Vagina (tissue), 2 donors: ENCODE measurements at regions of chr9 and their contacts with region 1.

Region 1: GRCh38 chr9:112355427-112355897 is 22.0 kb upstream of the PTBP3 start:
- DNase-seq: no peak
- H3K4me3 ChIP-seq: no peak overlapping the region
- H3K27ac ChIP-seq: no peak overlapping the region
- H3K4me1 ChIP-seq: no peaks in the 10 kb centered on the region
- H3K27me3 ChIP-seq: no peaks in the 10 kb centered on the region
- CTCF ChIP-seq: no peak
- POLR2A ChIP-seq: no peak

Region 2: GRCh38 chr9:112097712-112098688 is 257.5 kb before region 1 on chr9:
- intact Hi-C with region 1: loop called (anchors 10 kb)
- DNase-seq: no peak
- H3K4me3 ChIP-seq: no peak overlapping the region
- H3K27ac ChIP-seq: no peak overlapping the region
- H3K4me1 ChIP-seq: no peaks in the 10 kb centered on the region
- H3K27me3 ChIP-seq: no peaks in the 10 kb centered on the region
- CTCF ChIP-seq: peak; percentile 64 to 78 (median 77)
- POLR2A ChIP-seq: no peak

Region 3: GRCh38 chr9:112421771-112422222 is 66.3 kb after region 1 on chr9:
- intact Hi-C with region 1: no loop called
- DNase-seq: no peak
- H3K4me3 ChIP-seq: no peak overlapping the region
- H3K27ac ChIP-seq: no peak overlapping the region
- H3K4me1 ChIP-seq: no peaks in the 10 kb centered on the region
- H3K27me3 ChIP-seq: no peaks in the 10 kb centered on the region
- CTCF ChIP-seq: no peak
- POLR2A ChIP-seq: no peak

Region 4: GRCh38 chr9:112605518-112605917 is 250.1 kb after region 1 on chr9:
- intact Hi-C with region 1: no loop called
- DNase-seq: no peak
- H3K4me3 ChIP-seq: no peak overlapping the region
- H3K27ac ChIP-seq: no peak overlapping the region
- H3K4me1 ChIP-seq: no peaks in the 10 kb centered on the region
- H3K27me3 ChIP-seq: no peaks in the 10 kb centered on the region
- CTCF ChIP-seq: no peak
- POLR2A ChIP-seq: no peak

Region 5: GRCh38 chr9:112764344-112764743 is 408.9 kb after region 1 on chr9:
- intact Hi-C with region 1: no loop called
- DNase-seq: no peak
- H3K4me3 ChIP-seq: no peak overlapping the region
- H3K27ac ChIP-seq: no peak overlapping the region
- H3K4me1 ChIP-seq: peaks cover 12% of the 10 kb centered on the region
- H3K27me3 ChIP-seq: no peaks in the 10 kb centered on the region
- CTCF ChIP-seq: no peak
- POLR2A ChIP-seq: no peak

Region 6: DNA sequence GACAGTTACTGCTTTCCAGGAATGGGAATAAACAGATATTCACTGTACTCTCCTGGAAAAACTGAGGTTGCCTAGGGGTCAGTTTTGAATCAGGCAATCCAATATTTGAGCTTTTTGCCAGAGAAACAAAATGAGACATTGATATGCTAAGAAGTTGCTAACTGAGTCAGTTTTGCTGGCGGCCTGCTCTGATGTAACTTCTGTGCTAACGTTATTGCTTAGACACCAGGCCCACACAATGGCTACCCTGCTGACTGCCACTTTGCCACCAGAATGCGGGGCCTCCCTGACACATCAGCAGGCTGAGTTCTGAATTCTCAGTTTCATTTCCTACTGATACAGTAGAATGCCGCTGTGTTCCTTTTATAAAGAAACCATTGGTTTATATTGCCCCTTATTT is 1502.4 kb after region 1 on chr9:
- intact Hi-C with region 1: no loop called
- DNase-seq: no peak
- H3K4me3 ChIP-seq: no peak overlapping the region
- H3K27ac ChIP-seq: no peak overlapping the region
- H3K4me1 ChIP-seq: no peaks in the 10 kb centered on the region
- H3K27me3 ChIP-seq: no peaks in the 10 kb centered on the region
- CTCF ChIP-seq: no peak
- POLR2A ChIP-seq: no peak